ENCODE measurements at regions of chrX and their contacts with region 1.

Region 1: DNA sequence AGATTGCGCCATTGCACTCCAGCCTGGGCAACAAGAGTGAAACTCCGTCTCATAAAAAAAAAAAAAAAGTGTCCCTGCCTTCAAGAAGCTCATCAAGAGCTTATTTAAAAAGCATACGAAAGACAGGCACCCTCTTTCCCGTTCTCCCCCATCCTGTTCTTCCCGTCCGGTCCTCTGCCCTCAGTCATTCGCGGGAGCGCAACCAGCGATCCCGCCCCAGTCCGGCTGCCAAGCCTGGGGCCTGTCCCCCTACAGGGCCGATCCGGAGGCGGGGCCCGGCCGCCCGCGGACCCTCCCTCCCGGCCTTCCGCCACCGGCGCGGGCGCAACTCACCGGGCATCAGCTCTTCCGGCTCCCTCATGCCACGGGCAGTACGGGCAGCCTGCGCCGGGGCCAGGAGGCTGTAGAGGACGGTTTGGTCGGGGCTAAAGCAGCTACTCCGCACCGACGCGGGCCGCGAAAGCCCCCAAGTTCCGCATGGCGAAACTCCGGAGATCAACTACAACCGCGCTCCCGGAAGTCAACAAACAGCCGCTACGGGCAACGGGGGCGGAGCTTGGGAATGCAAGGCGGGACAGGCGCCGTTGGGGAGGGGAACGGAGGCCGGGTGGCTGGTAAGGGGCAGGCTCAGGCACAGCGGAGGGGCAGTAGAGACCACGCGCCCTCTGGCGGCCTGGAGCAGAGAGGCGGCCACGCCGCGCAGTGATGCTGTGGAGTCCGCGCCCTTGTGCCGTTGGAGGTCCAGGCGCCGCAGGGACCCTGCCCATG is at the start of gene RPGR:
- DNase-seq: peak; percentile 96
- H3K4me3 Mint-ChIP-seq: peak within 1 kb of the TSS; percentile 90
- H3K27ac Mint-ChIP-seq: peak within 1 kb of the TSS; percentile 91
- H3K4me1 Mint-ChIP-seq: peaks cover 20% of the 10 kb centered on the region
- H3K27me3 Mint-ChIP-seq: no peaks in the 10 kb centered on the region
- CTCF ChIP-seq: peak; percentile 39
- total RNA-seq, gene RPGR: 8.9 and 10.5 TPM in 2 replicates

Region 2: GRCh38 chrX:38192007-38192810 is 135.0 kb before region 1 on chrX:
- CTCF ChIA-PET with region 1: interaction called, 10 read pairs
- intact Hi-C with region 1: loop called (anchors 2 kb)
- DNase-seq: peak; percentile 28
- H3K4me3 Mint-ChIP-seq: no peak overlapping the region
- H3K27ac Mint-ChIP-seq: no peak overlapping the region
- H3K4me1 Mint-ChIP-seq: no peaks in the 10 kb centered on the region
- H3K27me3 Mint-ChIP-seq: peaks cover 17% of the 10 kb centered on the region
- CTCF ChIP-seq: peak; percentile 49

Region 3: DNA sequence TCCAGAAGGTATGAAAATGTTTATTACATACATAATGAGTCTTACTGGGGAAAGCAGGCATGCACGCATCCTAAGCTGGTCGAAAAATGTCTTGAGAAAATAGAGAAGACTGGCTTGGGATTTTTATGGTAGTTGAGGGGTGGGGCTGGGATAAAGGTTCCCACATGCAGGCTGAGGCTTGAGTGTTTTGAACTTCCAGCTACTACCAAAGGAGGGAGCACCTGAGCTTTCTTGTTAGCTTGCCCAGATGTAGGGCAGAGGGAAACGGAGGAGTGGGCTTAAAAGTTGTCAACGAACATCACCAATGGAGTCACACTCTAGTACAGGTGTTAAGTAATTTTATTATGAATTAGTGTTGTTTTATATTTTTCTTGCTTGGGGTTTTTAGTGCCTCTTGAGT is 67.0 kb before region 1 on chrX:
- CTCF ChIA-PET with region 1: interaction called, 12 read pairs
- intact Hi-C with region 1: loop called (anchors 1 kb)
- DNase-seq: peak; percentile 33
- H3K4me3 Mint-ChIP-seq: no peak overlapping the region
- H3K27ac Mint-ChIP-seq: no peak overlapping the region
- H3K4me1 Mint-ChIP-seq: no peaks in the 10 kb centered on the region
- H3K27me3 Mint-ChIP-seq: no peaks in the 10 kb centered on the region
- CTCF ChIP-seq: peak; percentile 64

Region 4: DNA sequence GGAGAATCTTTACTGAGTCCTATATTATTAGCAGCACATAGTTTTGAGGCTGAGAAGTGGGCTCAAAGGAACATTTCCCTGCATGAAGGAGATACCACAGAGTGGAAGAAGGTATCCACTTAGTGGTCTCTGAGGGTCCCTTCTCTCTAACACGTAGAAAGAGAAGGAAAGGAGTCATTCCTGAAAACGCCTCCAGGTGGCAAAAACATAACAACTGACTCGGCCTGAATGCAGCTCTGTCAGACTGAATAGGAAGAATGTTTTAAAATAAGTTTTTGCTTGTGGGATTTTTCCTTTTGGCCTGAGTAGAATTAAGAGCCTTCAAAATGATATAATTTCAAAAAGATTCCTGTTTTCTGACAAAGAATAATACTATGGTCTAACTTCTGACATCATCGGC is 23.2 kb before region 1 on chrX:
- CTCF ChIA-PET with region 1: interaction called, 12 read pairs
- intact Hi-C with region 1: no loop called
- DNase-seq: no peak
- H3K4me3 Mint-ChIP-seq: no peak overlapping the region
- H3K27ac Mint-ChIP-seq: no peak overlapping the region
- H3K4me1 Mint-ChIP-seq: no peaks in the 10 kb centered on the region
- H3K27me3 Mint-ChIP-seq: no peaks in the 10 kb centered on the region
- CTCF ChIP-seq: peak; percentile 42